ENCODE measurements at regions of chr17 and their contacts with region 1.

Region 1: GRCh38 chr17:18025945-18026776 is 12.8 kb downstream of the ATPAF2 start:
- DNase-seq: no peak
- H3K4me3 ChIP-seq: no peak overlapping the region
- H3K27ac ChIP-seq: no peak overlapping the region
- H3K4me1 ChIP-seq: no peaks in the 10 kb centered on the region
- H3K27me3 ChIP-seq: no peaks in the 10 kb centered on the region
- CTCF ChIP-seq: no peak
- POLR2A ChIP-seq: no peak

Region 2: GRCh38 chr17:17675925-17676534 is 350.1 kb before region 1 on chr17:
- intact Hi-C with region 1: loop called (anchors 10 kb)
- DNase-seq: no peak
- H3K4me3 ChIP-seq: no peak overlapping the region
- H3K27ac ChIP-seq: no peak overlapping the region
- H3K4me1 ChIP-seq: no peaks in the 10 kb centered on the region
- H3K27me3 ChIP-seq: no peaks in the 10 kb centered on the region
- CTCF ChIP-seq: no peak
- POLR2A ChIP-seq: no peak

Region 3: GRCh38 chr17:18076936-18077335 is 50.8 kb after region 1 on chr17:
- intact Hi-C with region 1: no loop called
- DNase-seq: no peak
- H3K4me3 ChIP-seq: no peak overlapping the region
- H3K27ac ChIP-seq: no peak overlapping the region
- H3K4me1 ChIP-seq: no peaks in the 10 kb centered on the region
- H3K27me3 ChIP-seq: no peaks in the 10 kb centered on the region
- CTCF ChIP-seq: no peak
- POLR2A ChIP-seq: no peak

Region 4: GRCh38 chr17:18087610-18088491 is 61.7 kb after region 1 on chr17 and contains the start of gene DRG2:
- intact Hi-C with region 1: no loop called
- DNase-seq: peak; percentile 87 to 95
- H3K4me3 ChIP-seq: peak within 1 kb of the TSS; percentile 76 to 78
- H3K27ac ChIP-seq: peak within 1 kb of the TSS; percentile 78 to 89
- H3K4me1 ChIP-seq: no peaks in the 10 kb centered on the region
- H3K27me3 ChIP-seq: no peaks in the 10 kb centered on the region
- CTCF ChIP-seq: peak in 3 of 4 experiments; percentile 19 to 59 (median 50)
- POLR2A ChIP-seq: peak in 1 of 2 donors; percentile 45
- total RNA-seq, gene DRG2: 33.0 to 45.6 (median 41.4) TPM